Adrenal gland (tissue), 19 donors: ENCODE measurements at regions of chr1 and their contacts with region 1.

Region 1: GRCh38 chr1:154263465-154264332 is 8.7 kb upstream of the HAX1 start:
- DNase-seq: peak in 4 of 7 donors; percentile 27 to 46 (median 37)
- H3K4me3 ChIP-seq: no peak overlapping the region
- H3K27ac ChIP-seq: peak overlapping the region in 1 of 5 donors; percentile 2
- H3K4me1 ChIP-seq: peaks cover 0 to 16% of the 10 kb centered on the region in 2 donors
- H3K27me3 ChIP-seq: no peaks in the 10 kb centered on the region
- CTCF ChIP-seq: no peak
- POLR2A ChIP-seq: no peak

Region 2: DNA sequence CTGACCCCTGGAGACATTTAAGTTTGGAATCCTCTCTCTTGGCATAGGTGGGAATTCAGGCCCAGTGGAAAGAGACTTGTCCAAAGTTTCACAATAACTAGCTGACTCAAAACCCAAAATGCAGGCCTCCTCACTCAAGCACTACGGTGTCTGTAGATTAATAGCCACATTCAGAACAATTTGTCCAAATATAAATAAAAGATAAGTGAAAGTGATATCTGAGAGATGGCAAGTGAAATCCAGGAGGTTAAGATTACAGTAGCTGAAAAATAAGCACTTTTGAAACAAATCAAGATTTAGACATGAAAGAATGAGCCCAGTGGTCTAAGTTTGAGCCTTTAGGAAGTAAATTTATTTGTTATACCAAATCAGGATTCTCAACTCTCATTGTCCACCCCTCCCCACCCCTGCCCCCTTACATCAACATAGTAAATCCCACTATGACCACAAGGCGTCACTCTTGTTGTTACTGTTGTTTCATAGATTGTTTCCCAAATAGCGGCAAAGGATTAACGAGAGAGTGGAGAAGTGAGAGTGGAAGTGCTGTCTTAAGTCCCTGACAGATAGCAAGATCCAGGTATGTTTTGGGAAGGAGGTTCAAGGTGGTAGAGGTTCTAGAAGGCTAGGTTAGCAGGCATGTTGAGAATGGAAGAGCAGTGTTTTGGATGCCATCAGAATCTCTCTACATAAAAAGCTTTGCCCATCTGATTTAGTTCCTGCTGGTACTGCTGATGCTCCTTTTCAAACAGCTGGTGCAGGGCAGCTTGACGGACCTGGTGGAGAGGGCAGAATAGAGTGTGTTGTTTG is 64.7 kb before region 1 on chr1:
- intact Hi-C with region 1: loop called (anchors 5 to 10 kb)
- DNase-seq: peak in 6 of 7 donors; percentile 49 to 73 (median 61)
- H3K4me3 ChIP-seq: peak overlapping the region in 1 of 4 donors; percentile 18
- H3K27ac ChIP-seq: peak overlapping the region in 1 of 5 donors; percentile 44
- H3K4me1 ChIP-seq: peaks cover 0 to 7% of the 10 kb centered on the region in 2 donors
- H3K27me3 ChIP-seq: no peaks in the 10 kb centered on the region
- CTCF ChIP-seq: peak; percentile 28 to 69 (median 56)
- POLR2A ChIP-seq: no peak